ENCODE measurements at regions of chr18 and their contacts with region 1.

Region 1: GRCh38 chr18:49561289-49562193 is at the start of gene LIPG:
- DNase-seq: peak; percentile 97
- H3K4me3 ChIP-seq: peak within 1 kb of the TSS; percentile 40 to 70 (median 61)
- H3K27ac ChIP-seq: peak within 1 kb of the TSS; percentile 65
- H3K4me1 ChIP-seq: peaks cover 28% of the 10 kb centered on the region
- H3K27me3 ChIP-seq: no peaks in the 10 kb centered on the region
- CTCF ChIP-seq: no peak
- total RNA-seq, gene LIPG: 78.8 to 153 TPM

Region 2: DNA sequence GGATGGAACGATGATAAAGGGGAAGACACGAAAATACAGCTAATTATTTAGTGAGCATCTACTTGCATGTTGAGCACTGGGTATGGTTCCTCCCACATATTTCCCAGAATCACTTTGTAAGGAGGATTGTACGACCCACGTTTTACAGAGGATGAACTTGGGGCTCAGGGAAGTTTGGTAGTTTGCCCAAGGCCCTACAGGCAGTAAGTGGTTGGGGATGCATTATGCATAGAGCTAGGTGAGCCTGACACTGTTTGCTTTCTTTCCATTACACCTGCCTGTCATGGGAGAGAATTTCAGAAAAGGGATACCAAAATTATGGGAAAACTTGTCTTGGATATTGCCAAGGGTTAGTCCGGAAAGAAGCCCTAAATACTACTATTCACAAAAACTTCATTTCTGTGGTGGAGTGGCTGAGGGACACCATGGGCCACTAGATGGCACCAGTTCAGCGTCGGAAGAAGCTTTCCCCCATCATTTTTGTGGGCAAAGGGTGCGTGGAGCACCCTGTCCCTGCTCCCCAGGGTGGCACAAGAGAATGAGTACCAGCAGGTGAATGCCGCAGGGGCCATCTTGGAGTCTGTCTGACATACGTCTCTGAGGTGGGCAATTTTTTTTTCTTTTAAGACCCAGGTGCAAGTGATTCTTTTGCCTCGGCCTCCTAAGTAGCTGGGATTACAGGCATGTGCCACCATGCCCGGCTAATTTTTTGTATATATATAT is 51.0 kb before region 1 on chr18:
- CTCF ChIA-PET with region 1: no interaction called
- dilution Hi-C with region 1: no loop called
- in situ Hi-C with region 1: no loop called
- intact Hi-C with region 1: loop called (anchors 2 kb)
- DNase-seq: peak; percentile 46
- H3K4me3 ChIP-seq: no peak overlapping the region
- H3K27ac ChIP-seq: no peak overlapping the region
- H3K4me1 ChIP-seq: no peaks in the 10 kb centered on the region
- H3K27me3 ChIP-seq: no peaks in the 10 kb centered on the region
- CTCF ChIP-seq: peak; percentile 92 to 93

Region 3: DNA sequence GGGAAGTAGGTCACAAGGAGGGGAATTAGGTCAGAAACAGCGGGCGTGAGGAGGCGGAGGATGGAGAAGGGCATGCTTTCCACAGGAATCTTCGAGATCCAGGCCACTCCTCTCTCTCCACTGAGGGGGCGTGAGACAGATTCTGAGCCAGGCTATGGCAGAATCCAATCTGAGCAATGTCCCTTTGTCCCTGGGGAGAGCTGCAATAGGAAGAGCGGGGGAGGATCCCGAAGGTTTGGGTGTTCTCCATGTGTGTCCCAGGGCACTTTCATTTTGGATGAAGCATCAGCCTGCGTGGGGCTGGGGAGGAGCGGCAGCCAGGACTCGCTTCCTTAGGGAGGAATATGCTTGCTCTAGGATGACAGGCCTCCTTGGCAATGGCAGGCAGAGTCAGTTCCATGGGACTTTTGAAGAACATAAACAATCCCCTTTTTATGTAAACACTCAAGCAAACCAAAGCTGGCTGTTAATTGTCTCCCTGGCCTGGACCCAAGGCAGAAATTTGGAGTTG is 84.4 kb after region 1 on chr18:
- CTCF ChIA-PET with region 1: no interaction called
- dilution Hi-C with region 1: no loop called
- in situ Hi-C with region 1: no loop called
- intact Hi-C with region 1: loop called (anchors 2 kb)
- DNase-seq: peak; percentile 42
- H3K4me3 ChIP-seq: peak overlapping the region in 2 of 3 experiments; percentile 1 to 32
- H3K27ac ChIP-seq: no peak overlapping the region
- H3K4me1 ChIP-seq: peaks cover 5% of the 10 kb centered on the region
- H3K27me3 ChIP-seq: no peaks in the 10 kb centered on the region
- CTCF ChIP-seq: no peak

Region 4: DNA sequence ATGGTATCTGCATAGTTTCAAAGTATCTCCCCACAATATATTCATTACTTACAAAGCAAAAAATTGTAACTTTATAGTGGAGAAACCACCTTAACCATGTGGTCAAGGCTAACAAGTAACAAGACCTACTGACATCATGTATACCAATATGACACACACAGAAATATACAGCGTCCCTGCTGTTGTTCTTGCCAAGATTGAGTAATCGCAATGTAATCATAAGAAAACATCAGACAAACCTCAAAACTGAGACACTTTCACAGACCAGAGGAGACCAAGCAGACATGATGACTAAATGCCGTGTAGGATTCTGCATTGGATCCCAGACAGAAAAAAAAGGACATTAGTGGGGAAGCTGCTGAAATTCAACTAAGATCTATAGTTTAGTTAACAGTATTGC is 128.8 kb after region 1 on chr18:
- CTCF ChIA-PET with region 1: no interaction called
- dilution Hi-C with region 1: no loop called
- in situ Hi-C with region 1: no loop called
- intact Hi-C with region 1: loop called (anchors 10 kb)
- DNase-seq: peak; percentile 99
- H3K4me3 ChIP-seq: no peak overlapping the region
- H3K27ac ChIP-seq: peak overlapping the region; percentile 72
- H3K4me1 ChIP-seq: peaks cover 24% of the 10 kb centered on the region
- H3K27me3 ChIP-seq: no peaks in the 10 kb centered on the region
- CTCF ChIP-seq: no peak